GM10248 (cell line): ENCODE measurements at regions of chr20 and their contacts with region 1.

Region 1: DNA sequence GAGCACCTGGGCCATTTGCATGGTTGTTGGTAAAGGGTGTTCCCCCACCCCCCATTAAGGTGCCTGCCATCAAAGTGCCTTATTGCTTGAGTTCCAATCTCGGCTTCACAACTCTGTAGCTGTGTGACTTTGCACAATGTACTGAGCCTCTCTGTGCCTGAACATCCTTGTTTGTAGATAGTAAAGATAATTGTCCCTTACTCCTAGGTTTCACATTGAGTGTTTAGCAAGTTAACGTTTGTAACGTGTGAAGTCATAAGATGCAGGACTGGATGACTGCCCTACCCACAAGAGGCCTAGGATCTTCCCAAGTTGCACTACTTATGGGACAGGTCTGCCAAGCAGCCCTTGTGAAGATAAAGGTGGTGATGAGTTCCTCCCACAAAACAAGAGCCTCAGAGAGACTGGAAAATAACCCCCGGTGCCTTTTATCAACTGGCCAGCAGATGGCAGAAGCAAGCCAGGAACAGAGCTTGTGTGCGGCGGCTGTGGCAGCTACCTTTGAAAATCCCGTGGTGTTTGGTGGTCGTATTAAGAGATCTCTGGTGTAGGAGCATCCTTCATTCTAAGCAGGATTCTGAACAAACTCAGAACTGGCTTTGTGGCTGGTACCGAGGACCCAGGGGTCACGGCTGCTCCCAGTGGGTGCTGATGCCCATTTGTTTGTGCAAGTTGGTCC is 99.0 kb downstream of the CDH26 start:
- DNase-seq: peak; percentile 78
- CTCF ChIP-seq: peak; percentile 72

Region 2: GRCh38 chr20:60016406-60016805 is 40.9 kb before region 1 on chr20:
- CTCF ChIA-PET with region 1: no interaction called
- POLR2A ChIA-PET with region 1: no interaction called
- DNase-seq: no peak
- CTCF ChIP-seq: no peak

Region 3: GRCh38 chr20:60071965-60072364 is 14.7 kb after region 1 on chr20:
- CTCF ChIA-PET with region 1: interaction called, 13 read pairs
- POLR2A ChIA-PET with region 1: no interaction called
- DNase-seq: no peak
- CTCF ChIP-seq: no peak

Region 4: GRCh38 chr20:60100780-60101179 is 43.5 kb after region 1 on chr20:
- CTCF ChIA-PET with region 1: no interaction called
- POLR2A ChIA-PET with region 1: no interaction called
- DNase-seq: no peak
- CTCF ChIP-seq: no peak